ENCODE measurements at regions of chr11 and their contacts with region 1.

Region 1: GRCh38 chr11:83193315-83194280 is at the start of gene ANKRD42:
- DNase-seq: peak; percentile 97
- H3K4me3 Mint-ChIP-seq: peak within 1 kb of the TSS; percentile 94
- H3K27ac Mint-ChIP-seq: peak within 1 kb of the TSS; percentile 92
- H3K4me1 Mint-ChIP-seq: peaks cover 34% of the 10 kb centered on the region
- H3K27me3 Mint-ChIP-seq: no peaks in the 10 kb centered on the region
- CTCF ChIP-seq: no peak
- total RNA-seq, gene ANKRD42: 8.6 and 13.5 TPM in 2 replicates

Region 2: GRCh38 chr11:82906244-82906654 is 287.3 kb before region 1 on chr11:
- CTCF ChIA-PET with region 1: interaction called, 4 read pairs
- POLR2A ChIA-PET with region 1: interaction called, 44 read pairs
- intact Hi-C with region 1: loop called (anchors 1 kb)
- DNase-seq: peak; percentile 40
- H3K4me3 Mint-ChIP-seq: peak overlapping the region; percentile 37
- H3K27ac Mint-ChIP-seq: peak overlapping the region; percentile 40
- H3K4me1 Mint-ChIP-seq: peaks cover 34% of the 10 kb centered on the region
- H3K27me3 Mint-ChIP-seq: no peaks in the 10 kb centered on the region
- CTCF ChIP-seq: peak; percentile 46

Region 3: GRCh38 chr11:83051760-83052671 is 141.6 kb before region 1 on chr11:
- CTCF ChIA-PET with region 1: no interaction called
- POLR2A ChIA-PET with region 1: interaction called, 13 read pairs
- intact Hi-C with region 1: no loop called
- DNase-seq: peak; percentile 92
- H3K4me3 Mint-ChIP-seq: peak overlapping the region; percentile 43
- H3K27ac Mint-ChIP-seq: peak overlapping the region; percentile 84
- H3K4me1 Mint-ChIP-seq: peaks cover 50% of the 10 kb centered on the region
- H3K27me3 Mint-ChIP-seq: no peaks in the 10 kb centered on the region
- CTCF ChIP-seq: no peak

Region 4: GRCh38 chr11:83181815-83182214 is 11.8 kb before region 1 on chr11:
- CTCF ChIA-PET with region 1: interaction called, 5 read pairs
- POLR2A ChIA-PET with region 1: interaction called, 16 read pairs
- intact Hi-C with region 1: no loop called
- DNase-seq: no peak
- H3K4me3 Mint-ChIP-seq: no peak overlapping the region
- H3K27ac Mint-ChIP-seq: no peak overlapping the region
- H3K4me1 Mint-ChIP-seq: no peaks in the 10 kb centered on the region
- H3K27me3 Mint-ChIP-seq: no peaks in the 10 kb centered on the region
- CTCF ChIP-seq: no peak

Region 5: DNA sequence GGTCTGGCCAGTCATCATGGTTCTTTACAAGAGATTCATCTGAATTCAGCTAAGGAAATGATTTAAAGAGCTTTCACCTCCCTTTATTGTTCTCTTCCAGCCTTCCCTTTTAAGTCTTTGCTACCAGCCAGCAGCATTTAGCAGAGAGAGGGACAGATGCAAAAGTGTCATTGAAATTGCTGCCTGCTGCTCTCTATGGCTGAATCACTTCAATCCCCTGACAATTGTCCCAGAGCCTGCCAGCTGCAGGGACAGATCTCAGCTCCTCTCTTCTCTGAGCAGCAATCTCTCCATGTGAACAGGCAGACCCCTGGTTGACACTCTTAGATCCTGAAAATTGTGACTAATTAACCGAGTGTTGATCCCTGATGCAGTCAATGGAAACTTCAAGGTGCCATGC is 909.5 kb after region 1 on chr11:
- CTCF ChIA-PET with region 1: no interaction called
- POLR2A ChIA-PET with region 1: no interaction called
- intact Hi-C with region 1: no loop called
- DNase-seq: no peak
- H3K4me3 Mint-ChIP-seq: no peak overlapping the region
- H3K27ac Mint-ChIP-seq: no peak overlapping the region
- H3K4me1 Mint-ChIP-seq: no peaks in the 10 kb centered on the region
- H3K27me3 Mint-ChIP-seq: no peaks in the 10 kb centered on the region
- CTCF ChIP-seq: no peak